Activated CD4-positive, alpha-beta T cell treated with anti-CD3 and anti-CD28 coated beads, Interleukin-2, amount 10 ng/mL, durations not matched to agents 24 days and 14 days (primary cell): ENCODE measurements at regions of chr11 and their contacts with region 1.

Region 1: GRCh38 chr11:72814286-72815109 is at the start of gene ATG16L2:
- DNase-seq: peak; percentile 98
- H3K4me3 Mint-ChIP-seq: peak within 1 kb of the TSS; percentile 92
- H3K27ac Mint-ChIP-seq: peak within 1 kb of the TSS; percentile 100
- H3K4me1 Mint-ChIP-seq: peaks cover 44% of the 10 kb centered on the region
- H3K27me3 Mint-ChIP-seq: no peaks in the 10 kb centered on the region
- total RNA-seq, gene ATG16L2: 74.1 and 75.8 TPM in 2 replicates

Region 2: DNA sequence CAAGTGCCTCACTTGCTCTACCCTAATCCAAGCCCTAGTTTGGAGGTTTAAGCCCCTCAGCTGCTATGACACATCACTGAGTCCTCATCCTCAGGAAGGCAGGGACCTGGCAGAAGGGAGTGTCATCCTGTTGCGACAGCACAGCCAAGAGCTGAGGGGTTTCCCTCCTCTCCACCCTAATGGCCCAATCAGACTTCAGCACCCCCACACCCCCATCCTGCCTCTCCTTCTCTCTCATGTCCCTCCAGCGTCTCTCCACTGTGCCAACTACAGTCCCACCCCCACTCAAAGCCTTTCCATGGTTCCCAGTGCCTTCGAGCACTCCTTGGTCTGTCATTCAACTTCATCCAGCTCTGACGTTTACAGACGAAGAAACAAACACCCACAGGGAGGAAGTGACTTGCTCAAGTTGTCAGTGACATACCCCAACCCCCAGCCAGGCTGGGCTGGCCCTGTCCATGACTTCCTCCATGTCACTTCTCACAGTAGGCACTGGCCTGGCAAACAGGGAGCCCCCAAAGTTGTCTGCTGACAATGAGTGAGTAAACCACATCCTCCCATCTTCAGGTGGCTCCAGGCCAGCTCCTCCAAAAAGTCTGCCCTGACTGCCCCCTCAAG is 77.9 kb before region 1 on chr11:
- intact Hi-C with region 1: loop called (anchors 1 kb)
- DNase-seq: peak; percentile 89
- H3K4me3 Mint-ChIP-seq: peak overlapping the region; percentile 61
- H3K27ac Mint-ChIP-seq: peak overlapping the region; percentile 91
- H3K4me1 Mint-ChIP-seq: peaks cover 44% of the 10 kb centered on the region
- H3K27me3 Mint-ChIP-seq: no peaks in the 10 kb centered on the region

Region 3: GRCh38 chr11:72752088-72752914 is 62.2 kb before region 1 on chr11 and contains the start of gene ARAP1:
- intact Hi-C with region 1: loop called (anchors 1 kb)
- DNase-seq: peak; percentile 91
- H3K4me3 Mint-ChIP-seq: peak within 1 kb of the TSS; percentile 87
- H3K27ac Mint-ChIP-seq: peak within 1 kb of the TSS; percentile 94
- H3K4me1 Mint-ChIP-seq: peaks cover 24% of the 10 kb centered on the region
- H3K27me3 Mint-ChIP-seq: no peaks in the 10 kb centered on the region
- total RNA-seq, gene ARAP1: 76.9 and 81.5 TPM in 2 replicates

Region 4: DNA sequence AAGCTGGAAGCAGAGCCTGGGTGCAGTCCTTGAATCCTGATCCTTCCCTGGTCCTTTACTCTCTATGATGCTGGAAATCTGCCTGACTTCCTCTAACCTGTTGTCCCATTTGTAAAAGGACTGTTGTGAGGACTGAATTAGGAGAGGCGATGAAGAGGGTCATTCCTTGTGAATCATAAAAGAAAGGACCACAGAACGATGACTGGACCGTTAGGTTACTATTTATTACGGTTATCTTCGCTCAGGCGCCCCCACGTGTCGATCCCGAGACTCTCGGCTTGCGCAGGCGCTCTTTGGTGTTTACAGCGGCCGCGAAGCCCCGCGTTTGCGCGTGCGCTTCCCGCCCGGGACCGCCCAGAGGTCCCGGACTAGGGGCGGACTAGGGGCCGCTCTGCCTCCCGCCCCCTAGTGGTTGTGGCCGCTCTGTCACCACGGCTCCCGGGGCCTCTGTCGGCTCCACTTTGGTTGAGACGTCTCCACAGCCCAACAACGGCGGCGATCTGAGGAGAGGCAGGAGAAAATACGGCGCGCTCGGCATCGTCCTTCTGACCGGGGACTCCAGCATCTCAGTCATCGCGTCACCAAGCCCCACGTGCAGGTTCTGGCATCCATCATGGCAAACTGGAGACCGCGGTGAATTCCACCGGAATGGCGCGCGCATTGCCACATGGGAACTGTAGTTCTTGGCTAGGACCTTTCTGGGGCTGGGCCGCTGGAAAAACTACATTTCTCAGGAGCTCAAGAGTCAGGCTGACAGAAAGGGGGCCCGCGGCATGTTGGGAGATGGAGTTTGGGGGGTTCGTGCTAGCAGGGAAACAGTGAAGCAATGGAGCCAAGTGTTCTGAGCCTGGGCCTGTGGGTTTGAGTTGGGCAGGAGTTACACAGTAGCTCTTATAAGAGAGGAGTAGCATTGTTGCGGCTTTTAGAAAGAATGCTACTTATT is 20.8 kb before region 1 on chr11 and contains the start of gene STARD10:
- intact Hi-C with region 1: loop called (anchors 1 kb)
- DNase-seq: peak; percentile 99
- H3K4me3 Mint-ChIP-seq: peak within 1 kb of the TSS; percentile 94
- H3K27ac Mint-ChIP-seq: peak within 1 kb of the TSS; percentile 99
- H3K4me1 Mint-ChIP-seq: peaks cover 23% of the 10 kb centered on the region
- H3K27me3 Mint-ChIP-seq: no peaks in the 10 kb centered on the region
- total RNA-seq, gene STARD10: 16.3 and 17.2 TPM in 2 replicates

Region 5: DNA sequence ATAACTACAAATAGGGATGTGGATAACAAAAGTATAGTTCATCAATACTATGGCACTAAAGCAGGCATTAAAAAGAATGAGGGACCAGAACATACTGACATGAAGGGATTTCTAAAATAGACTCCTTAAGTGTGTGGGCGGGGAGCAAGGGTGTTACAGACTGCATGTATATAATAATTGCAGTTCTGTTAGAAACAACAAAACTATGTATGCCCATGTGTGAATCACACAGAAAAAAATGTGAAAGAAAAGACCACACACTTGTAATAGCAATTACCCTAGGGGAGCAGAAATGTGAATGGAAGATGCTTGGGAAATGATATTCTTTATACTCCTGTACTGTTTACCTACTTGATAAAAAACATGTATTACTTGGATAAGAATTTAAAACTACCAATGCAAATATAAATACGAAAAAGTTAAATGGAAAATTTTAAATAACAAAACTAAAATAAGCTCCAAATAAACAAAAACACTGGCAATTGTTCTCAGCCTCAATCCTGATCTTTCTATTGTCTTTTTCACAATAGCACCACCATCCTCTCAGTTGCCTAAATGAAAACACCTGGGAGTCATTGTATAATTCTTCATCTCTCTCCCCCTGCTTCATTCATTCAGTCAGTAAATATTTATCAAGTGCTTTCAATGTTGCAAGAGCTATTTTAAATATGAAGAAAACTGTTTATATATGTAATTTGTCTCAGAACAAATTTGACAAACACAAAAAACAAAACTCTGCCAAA is 197.8 kb after region 1 on chr11:
- intact Hi-C with region 1: no loop called
- DNase-seq: no peak
- H3K4me3 Mint-ChIP-seq: no peak overlapping the region
- H3K27ac Mint-ChIP-seq: no peak overlapping the region
- H3K4me1 Mint-ChIP-seq: peaks cover 2% of the 10 kb centered on the region
- H3K27me3 Mint-ChIP-seq: no peaks in the 10 kb centered on the region